Activated CD8-positive, alpha-beta memory T cell treated with anti-CD3 and anti-CD28 coated beads, Interleukin-2, amount 10 ng/mL, durations not matched to agents 7 days and 5 days (primary cell): ENCODE measurements at regions of chr3 and their contacts with region 1.

Region 1: GRCh38 chr3:198080521-198081280 is 120.7 kb downstream of the LMLN start:
- DNase-seq: peak; percentile 82
- ATAC-seq: peak; percentile 94
- H3K4me3 Mint-ChIP-seq: peak overlapping the region; percentile 73
- H3K27ac Mint-ChIP-seq: peak overlapping the region; percentile 72
- H3K4me1 Mint-ChIP-seq: peaks cover 6% of the 10 kb centered on the region
- H3K27me3 Mint-ChIP-seq: peaks cover 64% of the 10 kb centered on the region

Region 2: GRCh38 chr3:197830308-197830966 is 250.3 kb before region 1 on chr3:
- CTCF ChIA-PET with region 1: no interaction called
- DNase-seq: no peak
- ATAC-seq: no peak
- H3K4me3 Mint-ChIP-seq: no peak overlapping the region
- H3K27ac Mint-ChIP-seq: no peak overlapping the region
- H3K4me1 Mint-ChIP-seq: peaks cover 2% of the 10 kb centered on the region
- H3K27me3 Mint-ChIP-seq: no peaks in the 10 kb centered on the region

Region 3: GRCh38 chr3:197906023-197906849 is 174.5 kb before region 1 on chr3:
- CTCF ChIA-PET with region 1: interaction called, 10 read pairs
- DNase-seq: peak; percentile 90
- ATAC-seq: peak; percentile 90
- H3K4me3 Mint-ChIP-seq: peak overlapping the region; percentile 22
- H3K27ac Mint-ChIP-seq: peak overlapping the region; percentile 44
- H3K4me1 Mint-ChIP-seq: peaks cover 20% of the 10 kb centered on the region
- H3K27me3 Mint-ChIP-seq: no peaks in the 10 kb centered on the region

Region 4: GRCh38 chr3:197983076-197983475 is 97.6 kb before region 1 on chr3:
- CTCF ChIA-PET with region 1: no interaction called
- DNase-seq: no peak
- ATAC-seq: no peak
- H3K4me3 Mint-ChIP-seq: no peak overlapping the region
- H3K27ac Mint-ChIP-seq: no peak overlapping the region
- H3K4me1 Mint-ChIP-seq: peaks cover 4% of the 10 kb centered on the region
- H3K27me3 Mint-ChIP-seq: no peaks in the 10 kb centered on the region

Region 5: DNA sequence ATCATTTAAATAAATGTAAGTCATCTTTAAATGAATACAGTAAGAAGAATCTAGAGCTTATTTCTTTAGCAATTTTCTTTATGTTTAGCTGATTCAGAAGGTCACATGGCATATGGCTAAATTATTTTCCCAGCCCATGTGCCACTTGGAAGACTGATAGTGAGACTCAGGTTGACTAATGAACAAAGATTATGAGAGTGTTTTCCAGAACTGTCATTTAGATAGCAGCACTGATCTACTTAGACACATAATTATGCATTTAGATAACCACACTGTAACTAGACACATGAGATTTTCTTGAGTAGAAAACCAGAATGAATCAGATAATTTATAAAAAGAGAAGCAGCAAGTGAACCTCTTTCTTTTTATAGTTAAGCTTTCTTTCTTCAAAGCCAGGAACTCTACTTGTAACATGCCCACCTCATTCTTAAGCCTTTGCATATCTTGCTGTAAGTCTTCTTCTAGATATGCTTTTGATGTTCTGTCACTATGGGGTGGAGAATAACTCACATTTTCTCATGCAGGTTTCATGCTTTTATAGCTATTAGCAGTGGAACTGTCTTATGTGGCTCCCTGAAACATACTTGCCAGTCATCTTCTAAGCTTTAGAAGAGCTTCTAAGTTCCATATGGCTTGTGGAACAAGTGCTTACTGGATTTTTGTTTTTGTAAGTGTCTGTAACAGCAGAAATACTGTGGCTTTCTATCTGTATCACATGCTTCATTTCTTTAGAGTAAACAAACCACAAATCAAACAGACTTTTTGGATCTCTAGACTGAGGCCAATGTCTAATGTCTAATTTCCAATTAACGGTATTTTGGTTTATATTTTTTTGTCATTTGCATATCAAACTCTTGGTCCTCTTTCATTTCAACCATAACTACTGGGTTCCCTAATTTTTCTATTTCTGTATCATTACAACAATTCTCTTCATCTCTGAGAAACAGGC is 19.3 kb before region 1 on chr3:
- CTCF ChIA-PET with region 1: interaction called, 40 read pairs
- DNase-seq: no peak
- ATAC-seq: no peak
- H3K4me3 Mint-ChIP-seq: no peak overlapping the region
- H3K27ac Mint-ChIP-seq: no peak overlapping the region
- H3K4me1 Mint-ChIP-seq: no peaks in the 10 kb centered on the region
- H3K27me3 Mint-ChIP-seq: peaks cover 35% of the 10 kb centered on the region

Region 6: GRCh38 chr3:198093112-198093679 is 12.5 kb after region 1 on chr3:
- CTCF ChIA-PET with region 1: interaction called, 32 read pairs
- DNase-seq: no peak
- ATAC-seq: no peak
- H3K4me3 Mint-ChIP-seq: no peak overlapping the region
- H3K27ac Mint-ChIP-seq: no peak overlapping the region
- H3K4me1 Mint-ChIP-seq: no peaks in the 10 kb centered on the region
- H3K27me3 Mint-ChIP-seq: peaks cover 51% of the 10 kb centered on the region